B cell (primary cell): ENCODE measurements at regions of chr4 and their contacts with region 1.

Region 1: DNA sequence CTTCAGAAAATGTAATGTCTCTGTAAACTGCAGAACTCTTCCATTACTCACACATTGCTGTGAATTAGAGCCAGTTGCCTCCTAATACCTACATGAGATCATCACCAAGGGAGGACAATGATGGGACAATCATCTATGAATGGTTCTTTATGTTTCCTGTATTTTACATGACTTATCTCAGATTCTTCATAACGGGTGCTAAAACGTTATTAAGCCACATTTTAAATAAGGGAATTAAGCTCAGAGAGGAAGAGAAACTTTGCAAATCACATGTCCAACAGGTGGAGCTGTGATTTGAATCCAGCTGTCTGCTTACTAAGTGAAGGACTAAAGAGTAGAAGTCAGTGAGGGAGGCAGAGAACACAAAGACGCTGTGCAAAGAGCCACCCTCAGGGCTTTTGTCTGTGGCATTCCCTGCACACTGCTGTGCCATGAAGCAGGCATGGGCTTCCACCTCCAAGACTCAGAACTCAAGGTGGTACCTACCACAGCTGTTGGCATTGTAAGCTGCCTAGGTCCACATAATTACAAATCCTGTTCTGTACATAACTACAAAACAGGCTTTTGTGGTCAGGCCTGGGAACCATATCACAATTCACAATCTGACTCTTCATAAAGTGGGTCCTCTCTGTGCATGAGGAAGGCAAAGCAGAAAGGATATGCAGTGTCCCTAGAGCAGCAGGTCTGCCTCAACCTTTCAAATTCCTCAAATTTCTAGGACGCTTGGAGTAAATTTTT is 12.8 kb downstream of the TBC1D9 start:
- DNase-seq: peak; percentile 83
- ATAC-seq: peak; percentile 72
- H3K4me3 ChIP-seq: peak overlapping the region; percentile 7 to 59 (median 31)
- H3K4me3 Mint-ChIP-seq: peak overlapping the region; percentile 82
- H3K27ac ChIP-seq: peak overlapping the region; percentile 89 to 91
- H3K27ac Mint-ChIP-seq: peak overlapping the region; percentile 94
- H3K4me1 ChIP-seq: peaks cover 71 to 76% of the 10 kb centered on the region in 2 donors
- H3K4me1 Mint-ChIP-seq: peaks cover 87% of the 10 kb centered on the region
- H3K27me3 ChIP-seq: no peaks in the 10 kb centered on the region
- H3K27me3 Mint-ChIP-seq: no peaks in the 10 kb centered on the region
- CTCF ChIP-seq: peak; percentile 59

Region 2: DNA sequence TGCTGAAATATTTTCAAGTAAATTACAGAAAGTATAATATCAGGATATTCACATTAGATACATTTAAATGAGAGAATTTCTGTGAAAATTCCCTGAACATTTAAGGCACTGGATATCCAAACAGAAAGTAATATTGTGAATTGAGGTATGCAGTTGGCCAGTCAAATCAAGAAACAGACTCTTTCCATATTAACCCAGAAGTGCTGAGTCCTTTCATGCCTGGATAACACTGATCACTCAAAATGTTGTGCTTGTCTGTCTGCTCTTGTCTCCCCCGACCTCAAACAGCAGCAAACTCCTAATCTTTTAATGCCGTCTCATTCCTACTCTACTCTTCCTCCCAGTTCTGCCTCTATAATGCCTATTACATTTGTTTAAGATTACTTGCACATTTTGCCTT is 38.4 kb before region 1 on chr4:
- CTCF ChIA-PET with region 1: interaction called, 4 read pairs
- POLR2A ChIA-PET with region 1: no interaction called
- intact Hi-C with region 1: loop called (anchors 5 kb)
- DNase-seq: no peak
- ATAC-seq: no peak
- H3K4me3 ChIP-seq: no peak overlapping the region
- H3K4me3 Mint-ChIP-seq: peak overlapping the region; percentile 0
- H3K27ac ChIP-seq: no peak overlapping the region
- H3K27ac Mint-ChIP-seq: peak overlapping the region; percentile 38
- H3K4me1 ChIP-seq: peaks cover 16 to 23% of the 10 kb centered on the region in 2 donors
- H3K4me1 Mint-ChIP-seq: peaks cover 65% of the 10 kb centered on the region
- H3K27me3 ChIP-seq: no peaks in the 10 kb centered on the region
- H3K27me3 Mint-ChIP-seq: no peaks in the 10 kb centered on the region
- CTCF ChIP-seq: no peak

Region 3: GRCh38 chr4:140726776-140727500 is 16.4 kb before region 1 on chr4:
- CTCF ChIA-PET with region 1: interaction called, 36 read pairs
- POLR2A ChIA-PET with region 1: interaction called, 22 read pairs
- intact Hi-C with region 1: loop called (anchors 2 kb)
- DNase-seq: no peak
- ATAC-seq: peak; percentile 29
- H3K4me3 ChIP-seq: no peak overlapping the region
- H3K4me3 Mint-ChIP-seq: peak overlapping the region; percentile 26
- H3K27ac ChIP-seq: peak overlapping the region; percentile 48 to 65
- H3K27ac Mint-ChIP-seq: peak overlapping the region; percentile 83
- H3K4me1 ChIP-seq: peaks cover 52 to 60% of the 10 kb centered on the region in 2 donors
- H3K4me1 Mint-ChIP-seq: peaks cover 72% of the 10 kb centered on the region
- H3K27me3 ChIP-seq: no peaks in the 10 kb centered on the region
- H3K27me3 Mint-ChIP-seq: no peaks in the 10 kb centered on the region
- CTCF ChIP-seq: no peak

Region 4: GRCh38 chr4:140790765-140791164 is 47.4 kb after region 1 on chr4:
- CTCF ChIA-PET with region 1: interaction called, 11 read pairs
- POLR2A ChIA-PET with region 1: interaction called, 4 read pairs
- intact Hi-C with region 1: loop called (anchors 1 kb)
- DNase-seq: peak; percentile 93
- ATAC-seq: peak; percentile 92
- H3K4me3 ChIP-seq: peak overlapping the region in 1 of 5 experiments; percentile 31
- H3K4me3 Mint-ChIP-seq: peak overlapping the region; percentile 67
- H3K27ac ChIP-seq: peak overlapping the region; percentile 72 to 82
- H3K27ac Mint-ChIP-seq: peak overlapping the region; percentile 88
- H3K4me1 ChIP-seq: peaks cover 63 to 67% of the 10 kb centered on the region in 2 donors
- H3K4me1 Mint-ChIP-seq: peaks cover 69% of the 10 kb centered on the region
- H3K27me3 ChIP-seq: no peaks in the 10 kb centered on the region
- H3K27me3 Mint-ChIP-seq: no peaks in the 10 kb centered on the region
- CTCF ChIP-seq: no peak

Region 5: DNA sequence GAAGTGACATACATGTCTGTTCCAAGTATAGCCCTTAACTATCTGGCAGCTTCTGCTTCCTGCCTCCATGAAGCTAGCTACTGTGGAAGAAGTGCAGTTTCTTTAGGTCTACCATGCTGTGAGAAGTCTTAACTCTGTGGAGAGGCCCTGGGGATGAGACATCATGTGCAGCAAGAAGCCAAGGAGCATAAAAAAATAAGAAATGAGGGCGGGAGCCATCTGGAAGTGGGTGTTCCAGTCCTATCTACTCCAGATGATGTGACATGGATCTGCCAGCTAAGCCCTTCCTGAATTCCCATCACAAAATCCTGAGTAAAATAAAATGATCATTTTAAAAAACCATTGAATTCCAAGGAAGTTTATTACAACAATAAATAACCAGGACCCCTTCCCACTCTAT is 100.7 kb after region 1 on chr4:
- CTCF ChIA-PET with region 1: interaction called, 10 read pairs
- POLR2A ChIA-PET with region 1: no interaction called
- intact Hi-C with region 1: no loop called
- DNase-seq: no peak
- ATAC-seq: no peak
- H3K4me3 ChIP-seq: no peak overlapping the region
- H3K4me3 Mint-ChIP-seq: no peak overlapping the region
- H3K27ac ChIP-seq: no peak overlapping the region
- H3K27ac Mint-ChIP-seq: no peak overlapping the region
- H3K4me1 ChIP-seq: peaks cover 0 to 6% of the 10 kb centered on the region in 2 donors
- H3K4me1 Mint-ChIP-seq: peaks cover 28% of the 10 kb centered on the region
- H3K27me3 ChIP-seq: no peaks in the 10 kb centered on the region
- H3K27me3 Mint-ChIP-seq: no peaks in the 10 kb centered on the region
- CTCF ChIP-seq: no peak